CD14-positive monocyte (primary cell): ENCODE measurements at regions of chr15 and their contacts with region 1.

Region 1: GRCh38 chr15:59174835-59175831 is 31.5 kb upstream of the LDHAL6B start:
- DNase-seq: peak; percentile 59 to 74 (median 66)
- H3K4me3 ChIP-seq: peak overlapping the region in 1 of 3 experiments; percentile 37
- H3K4me3 Mint-ChIP-seq: peak overlapping the region in 1 of 2 donors; percentile 69
- H3K27ac ChIP-seq: peak overlapping the region in 1 of 2 donors; percentile 94
- H3K27ac Mint-ChIP-seq: peak overlapping the region; percentile 96 to 100 (median 99)
- H3K4me1 ChIP-seq: peaks cover 60 to 66% of the 10 kb centered on the region in 2 donors
- H3K4me1 Mint-ChIP-seq: peaks cover 59% of the 10 kb centered on the region
- H3K27me3 ChIP-seq: no peaks in the 10 kb centered on the region
- H3K27me3 Mint-ChIP-seq: peaks cover 0 to 5% (median 0%) of the 10 kb centered on the region in 3 donors
- CTCF ChIP-seq: peak; percentile 76

Region 2: DNA sequence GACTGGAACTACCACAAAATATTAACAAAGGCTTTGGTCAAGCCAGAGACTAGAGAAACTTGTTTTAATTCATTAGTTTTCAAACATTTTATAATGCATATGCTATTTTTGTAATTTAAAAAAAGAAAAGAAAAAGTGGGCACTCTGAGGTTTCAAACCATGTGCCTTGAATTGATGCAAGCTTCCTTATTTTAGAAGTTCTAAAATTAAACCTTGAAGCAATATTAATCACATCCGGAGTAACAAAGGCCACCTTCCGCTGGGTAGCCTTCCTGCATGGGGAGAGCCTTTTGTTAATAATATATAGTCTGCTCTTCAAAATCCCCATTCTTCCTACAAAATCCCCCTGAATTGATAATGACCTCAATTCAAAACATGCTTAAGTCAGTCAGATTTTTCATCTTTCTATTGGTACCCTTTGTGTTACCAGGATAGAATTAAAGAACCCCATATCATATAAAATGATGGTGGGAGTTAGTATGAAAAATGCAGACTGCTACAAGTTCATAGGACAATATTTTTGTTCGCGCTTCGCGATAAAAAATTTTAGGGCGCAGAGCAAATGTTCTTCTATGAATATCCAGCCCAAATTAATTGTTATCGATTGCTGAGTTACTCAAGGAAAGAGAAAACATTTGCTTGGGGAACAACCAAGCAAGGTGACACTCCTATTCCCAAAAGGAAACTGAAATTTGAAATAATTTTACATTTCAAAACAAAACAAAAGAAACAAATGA is 62.2 kb after region 1 on chr15:
- intact Hi-C with region 1: loop called in 1 of 2 experiments (anchors 5 kb)
- DNase-seq: peak; percentile 27 to 58 (median 57)
- H3K4me3 ChIP-seq: peak overlapping the region in 1 of 3 experiments; percentile 26
- H3K4me3 Mint-ChIP-seq: peak overlapping the region in 1 of 2 donors; percentile 31
- H3K27ac ChIP-seq: peak overlapping the region in 1 of 2 donors; percentile 26
- H3K27ac Mint-ChIP-seq: peak overlapping the region in 5 of 7 donors; percentile 22 to 43 (median 31)
- H3K4me1 ChIP-seq: peaks cover 17 to 25% of the 10 kb centered on the region in 2 donors
- H3K4me1 Mint-ChIP-seq: peaks cover 22% of the 10 kb centered on the region
- H3K27me3 ChIP-seq: no peaks in the 10 kb centered on the region
- H3K27me3 Mint-ChIP-seq: no peaks in the 10 kb centered on the region
- CTCF ChIP-seq: no peak

Region 3: GRCh38 chr15:59299929-59300617 is 124.9 kb after region 1 on chr15:
- intact Hi-C with region 1: loop called in 1 of 2 experiments (anchors 10 kb)
- DNase-seq: peak; percentile 95 to 96 (median 95)
- H3K4me3 ChIP-seq: peak overlapping the region in 1 of 3 experiments; percentile 65
- H3K4me3 Mint-ChIP-seq: peak overlapping the region; percentile 72 to 84
- H3K27ac ChIP-seq: peak overlapping the region; percentile 44 to 82
- H3K27ac Mint-ChIP-seq: peak overlapping the region; percentile 91 to 99 (median 96)
- H3K4me1 ChIP-seq: peaks cover 43 to 52% of the 10 kb centered on the region in 2 donors
- H3K4me1 Mint-ChIP-seq: peaks cover 57% of the 10 kb centered on the region
- H3K27me3 ChIP-seq: no peaks in the 10 kb centered on the region
- H3K27me3 Mint-ChIP-seq: no peaks in the 10 kb centered on the region
- CTCF ChIP-seq: no peak

Region 4: DNA sequence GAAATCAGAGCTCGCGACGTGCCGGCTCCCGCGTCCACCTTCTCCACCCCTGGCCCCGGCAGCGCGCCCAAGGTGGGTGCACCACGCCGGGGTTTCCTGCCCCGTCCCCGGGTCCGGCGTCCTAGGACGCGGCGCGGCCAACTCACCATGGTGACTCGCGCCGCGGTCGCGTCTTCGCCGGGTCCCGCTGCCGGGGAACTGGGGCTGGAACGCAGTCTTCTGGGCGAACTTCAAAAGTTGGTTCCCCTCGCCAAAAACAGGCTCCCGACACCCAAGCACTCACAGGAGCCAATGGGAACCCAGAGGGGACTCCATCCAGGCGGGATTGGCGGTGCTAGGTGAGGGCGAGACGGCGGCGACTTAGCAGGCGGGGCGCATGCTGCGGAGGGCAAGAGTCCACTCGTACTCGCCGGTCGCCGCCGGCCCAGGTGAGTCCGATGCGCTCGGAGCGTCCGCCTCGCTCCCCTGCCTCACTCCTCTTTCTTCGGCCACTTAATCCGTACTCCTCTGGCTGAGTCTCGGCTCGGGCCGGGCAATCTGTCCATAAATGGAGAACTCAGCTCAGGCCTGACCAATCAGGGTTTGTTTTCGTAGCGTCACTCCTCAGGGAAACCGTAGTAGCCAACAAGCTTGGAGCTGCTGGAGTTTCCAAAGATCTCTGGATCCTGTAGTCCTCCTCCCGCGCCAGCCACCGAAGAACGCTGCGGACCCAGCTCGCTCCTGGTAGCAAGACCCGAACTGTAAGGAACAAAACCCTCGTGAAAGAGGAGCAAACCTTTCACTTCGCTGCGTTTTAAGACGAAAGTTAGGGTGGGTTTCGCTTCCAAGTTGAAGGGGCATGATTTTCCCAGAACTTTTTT is 197.4 kb after region 1 on chr15 and contains the start of gene MYO1E:
- intact Hi-C with region 1: loop called in 1 of 2 experiments (anchors 10 kb)
- DNase-seq: peak; percentile 68 to 90 (median 89)
- H3K4me3 ChIP-seq: peak within 1 kb of the TSS; percentile 70 to 93 (median 84)
- H3K4me3 Mint-ChIP-seq: peak within 1 kb of the TSS; percentile 97
- H3K27ac ChIP-seq: peak within 1 kb of the TSS; percentile 63 to 64
- H3K27ac Mint-ChIP-seq: peak within 1 kb of the TSS; percentile 72 to 90 (median 88)
- H3K4me1 ChIP-seq: peaks cover 29 to 30% of the 10 kb centered on the region in 2 donors
- H3K4me1 Mint-ChIP-seq: peaks cover 34% of the 10 kb centered on the region
- H3K27me3 ChIP-seq: peaks cover 3 to 6% of the 10 kb centered on the region in 2 donors
- H3K27me3 Mint-ChIP-seq: peaks cover 11 to 18% (median 14%) of the 10 kb centered on the region in 3 donors
- CTCF ChIP-seq: no peak
- polyA plus RNA-seq, gene MYO1E: 5.5 to 16.2 (median 6.2) TPM

Region 5: GRCh38 chr15:59528965-59529402 is 353.9 kb after region 1 on chr15:
- intact Hi-C with region 1: loop called in 1 of 2 experiments (anchors 10 kb)
- DNase-seq: peak; percentile 59 to 76 (median 71)
- H3K4me3 ChIP-seq: no peak overlapping the region
- H3K4me3 Mint-ChIP-seq: no peak overlapping the region
- H3K27ac ChIP-seq: no peak overlapping the region
- H3K27ac Mint-ChIP-seq: peak overlapping the region in 1 of 7 donors; percentile 41
- H3K4me1 ChIP-seq: peaks cover 41 to 44% of the 10 kb centered on the region in 2 donors
- H3K4me1 Mint-ChIP-seq: peaks cover 47% of the 10 kb centered on the region
- H3K27me3 ChIP-seq: no peaks in the 10 kb centered on the region
- H3K27me3 Mint-ChIP-seq: peaks cover 0 to 3% (median 2%) of the 10 kb centered on the region in 3 donors
- CTCF ChIP-seq: peak; percentile 85